ENCODE measurements at regions of chr12 and their contacts with region 1.

Region 1: GRCh38 chr12:121793838-121794533 is 498 bp upstream of the RHOF start:
- DNase-seq: peak; percentile 97
- ATAC-seq: peak; percentile 53
- H3K4me3 ChIP-seq: peak overlapping the region; percentile 30 to 97 (median 92)
- H3K4me3 Mint-ChIP-seq: peak overlapping the region; percentile 88
- H3K27ac ChIP-seq: peak overlapping the region; percentile 59 to 100
- H3K27ac Mint-ChIP-seq: peak overlapping the region; percentile 90
- H3K4me1 ChIP-seq: peaks cover 50 to 72% of the 10 kb centered on the region in 2 donors
- H3K4me1 Mint-ChIP-seq: peaks cover 65% of the 10 kb centered on the region
- H3K27me3 ChIP-seq: no peaks in the 10 kb centered on the region
- H3K27me3 Mint-ChIP-seq: no peaks in the 10 kb centered on the region
- CTCF ChIP-seq: peak; percentile 95

Region 2: GRCh38 chr12:121467115-121467793 is 326.7 kb before region 1 on chr12:
- CTCF ChIA-PET with region 1: no interaction called
- POLR2A ChIA-PET with region 1: no interaction called
- intact Hi-C with region 1: loop called (anchors 5 kb)
- DNase-seq: peak; percentile 94
- ATAC-seq: peak; percentile 85
- H3K4me3 ChIP-seq: peak overlapping the region in 4 of 5 experiments; percentile 56 to 82 (median 76)
- H3K4me3 Mint-ChIP-seq: peak overlapping the region; percentile 49
- H3K27ac ChIP-seq: peak overlapping the region; percentile 62 to 82
- H3K27ac Mint-ChIP-seq: peak overlapping the region; percentile 86
- H3K4me1 ChIP-seq: peaks cover 23 to 49% of the 10 kb centered on the region in 2 donors
- H3K4me1 Mint-ChIP-seq: peaks cover 59% of the 10 kb centered on the region
- H3K27me3 ChIP-seq: no peaks in the 10 kb centered on the region
- H3K27me3 Mint-ChIP-seq: no peaks in the 10 kb centered on the region
- CTCF ChIP-seq: no peak

Region 3: GRCh38 chr12:121626087-121626852 is 167.7 kb before region 1 on chr12 and contains the start of gene ORAI1:
- CTCF ChIA-PET with region 1: interaction called, 8 read pairs
- POLR2A ChIA-PET with region 1: no interaction called
- intact Hi-C with region 1: loop called (anchors 5 kb)
- DNase-seq: peak; percentile 97
- ATAC-seq: peak; percentile 76
- H3K4me3 ChIP-seq: peak within 1 kb of the TSS; percentile 61 to 93 (median 82)
- H3K4me3 Mint-ChIP-seq: peak within 1 kb of the TSS; percentile 96
- H3K27ac ChIP-seq: peak within 1 kb of the TSS; percentile 87 to 91
- H3K27ac Mint-ChIP-seq: peak within 1 kb of the TSS; percentile 96
- H3K4me1 ChIP-seq: peaks cover 40 to 50% of the 10 kb centered on the region in 2 donors
- H3K4me1 Mint-ChIP-seq: peaks cover 48% of the 10 kb centered on the region
- H3K27me3 ChIP-seq: no peaks in the 10 kb centered on the region
- H3K27me3 Mint-ChIP-seq: no peaks in the 10 kb centered on the region
- CTCF ChIP-seq: no peak
- total RNA-seq, gene ORAI1: 43.2 and 44.2 TPM in 2 replicates

Region 4: DNA sequence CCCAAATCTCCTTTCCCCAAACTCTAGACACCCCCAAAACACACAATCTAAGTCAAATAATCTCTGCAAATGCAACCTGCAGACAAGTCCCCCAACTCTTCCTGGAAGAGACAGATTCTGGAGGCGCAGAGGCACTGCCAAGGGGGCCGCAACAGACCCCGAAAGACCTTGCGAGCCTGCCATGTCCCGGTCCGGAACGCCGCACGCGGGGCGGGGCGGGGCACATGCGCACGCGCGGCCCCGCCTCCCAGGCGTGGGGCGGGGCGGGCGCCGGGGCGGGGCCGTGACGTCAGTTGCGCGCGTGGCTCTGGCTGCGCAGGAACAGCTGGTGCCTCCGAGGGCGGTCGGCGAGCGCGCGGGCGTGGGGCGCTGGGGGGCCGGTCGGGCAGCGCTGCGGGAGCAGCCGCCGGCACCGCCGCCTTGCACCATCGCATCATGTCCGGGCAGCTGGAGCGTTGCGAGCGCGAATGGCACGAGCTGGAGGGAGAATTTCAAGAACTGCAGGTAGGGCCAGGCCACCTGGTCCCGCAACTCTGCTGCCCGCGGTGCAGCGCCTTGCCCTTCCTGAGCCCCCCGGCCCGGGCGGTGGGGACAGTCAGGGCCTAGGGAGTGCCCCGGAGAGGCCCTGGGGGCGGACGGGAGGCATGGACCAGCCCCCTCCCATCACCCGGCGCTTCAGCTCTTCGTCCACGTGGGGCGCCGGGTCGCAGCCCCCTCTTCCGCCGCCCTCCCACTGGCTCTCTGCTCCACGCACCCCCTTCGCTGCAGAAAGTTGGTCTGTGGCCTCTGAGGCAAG is 81.3 kb before region 1 on chr12 and contains the start of gene TMEM120B:
- CTCF ChIA-PET with region 1: interaction called, 60 read pairs
- POLR2A ChIA-PET with region 1: interaction called, 3 read pairs
- intact Hi-C with region 1: loop called (anchors 1 kb)
- DNase-seq: peak; percentile 93
- ATAC-seq: peak; percentile 92
- H3K4me3 ChIP-seq: peak within 1 kb of the TSS; percentile 84 to 97 (median 89)
- H3K4me3 Mint-ChIP-seq: peak within 1 kb of the TSS; percentile 92
- H3K27ac ChIP-seq: peak within 1 kb of the TSS; percentile 48 to 63
- H3K27ac Mint-ChIP-seq: peak within 1 kb of the TSS; percentile 89
- H3K4me1 ChIP-seq: peaks cover 22 to 28% of the 10 kb centered on the region in 2 donors
- H3K4me1 Mint-ChIP-seq: peaks cover 25% of the 10 kb centered on the region
- H3K27me3 ChIP-seq: no peaks in the 10 kb centered on the region
- H3K27me3 Mint-ChIP-seq: no peaks in the 10 kb centered on the region
- CTCF ChIP-seq: no peak
- total RNA-seq, gene TMEM120B: 9.2 and 11.5 TPM in 2 replicates

Region 5: DNA sequence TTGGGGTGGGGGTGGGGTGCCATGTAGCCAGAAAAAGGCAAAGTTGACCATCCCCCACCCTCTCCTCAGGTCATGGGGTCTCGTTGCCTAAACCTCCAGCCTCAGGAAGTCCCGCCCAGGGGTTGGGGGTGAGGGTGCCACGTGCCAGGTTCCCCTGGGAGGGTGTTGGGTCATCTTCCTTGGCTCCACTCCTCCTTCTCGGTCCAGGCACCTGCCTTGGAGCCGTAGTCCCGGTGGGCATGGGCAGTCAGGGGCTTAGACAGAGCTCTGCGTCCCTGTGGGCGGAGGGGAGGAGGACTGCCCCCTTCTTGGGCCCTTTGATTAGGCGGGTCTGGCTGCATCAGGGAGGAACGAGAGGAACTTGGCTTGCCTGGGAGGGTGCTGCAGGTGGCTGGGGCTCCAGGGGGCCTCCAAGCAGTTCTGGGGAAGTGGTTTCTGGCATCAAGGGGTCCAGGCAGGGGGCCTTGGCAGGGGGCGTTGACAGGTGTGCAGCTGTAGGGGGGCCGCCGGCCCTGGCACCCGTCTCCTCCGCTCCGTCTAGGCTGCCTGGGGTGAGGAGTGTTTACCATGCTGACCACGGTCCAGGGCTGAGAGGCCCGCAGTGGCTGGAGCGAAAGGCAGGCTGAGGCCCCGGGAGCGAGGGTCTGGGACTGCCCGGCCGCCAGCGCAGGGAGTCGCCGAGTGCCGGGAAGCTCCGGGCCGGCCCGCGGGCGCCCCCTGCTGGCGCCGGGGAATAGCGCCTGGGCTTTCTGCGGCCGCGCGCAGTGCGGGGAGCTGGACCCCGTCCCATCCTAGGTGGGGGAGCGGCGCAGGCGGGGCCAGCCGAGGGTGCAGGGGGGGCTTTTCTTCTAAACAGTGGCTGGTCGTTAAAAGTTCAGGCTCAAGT is 17.7 kb after region 1 on chr12:
- CTCF ChIA-PET with region 1: interaction called, 1,947 read pairs
- POLR2A ChIA-PET with region 1: interaction called, 267 read pairs
- intact Hi-C with region 1: loop called (anchors 1 kb)
- DNase-seq: peak; percentile 81
- ATAC-seq: peak; percentile 78
- H3K4me3 ChIP-seq: peak overlapping the region; percentile 11 to 53 (median 47)
- H3K4me3 Mint-ChIP-seq: peak overlapping the region; percentile 84
- H3K27ac ChIP-seq: peak overlapping the region; percentile 11 to 61
- H3K27ac Mint-ChIP-seq: peak overlapping the region; percentile 87
- H3K4me1 ChIP-seq: peaks cover 42 to 51% of the 10 kb centered on the region in 2 donors
- H3K4me1 Mint-ChIP-seq: peaks cover 48% of the 10 kb centered on the region
- H3K27me3 ChIP-seq: no peaks in the 10 kb centered on the region
- H3K27me3 Mint-ChIP-seq: no peaks in the 10 kb centered on the region
- CTCF ChIP-seq: peak; percentile 100

Region 6: GRCh38 chr12:121839106-121839992 is 45.4 kb after region 1 on chr12:
- CTCF ChIA-PET with region 1: interaction called, 38 read pairs
- POLR2A ChIA-PET with region 1: interaction called, 4 read pairs
- intact Hi-C with region 1: loop called (anchors 1 kb)
- DNase-seq: peak; percentile 99
- ATAC-seq: peak; percentile 99
- H3K4me3 ChIP-seq: peak overlapping the region; percentile 65 to 90 (median 78)
- H3K4me3 Mint-ChIP-seq: peak overlapping the region; percentile 99
- H3K27ac ChIP-seq: peak overlapping the region in 1 of 2 donors; percentile 56
- H3K27ac Mint-ChIP-seq: peak overlapping the region; percentile 91
- H3K4me1 ChIP-seq: peaks cover 7 to 16% of the 10 kb centered on the region in 2 donors
- H3K4me1 Mint-ChIP-seq: peaks cover 18% of the 10 kb centered on the region
- H3K27me3 ChIP-seq: no peaks in the 10 kb centered on the region
- H3K27me3 Mint-ChIP-seq: no peaks in the 10 kb centered on the region
- CTCF ChIP-seq: peak; percentile 13

Region 7: DNA sequence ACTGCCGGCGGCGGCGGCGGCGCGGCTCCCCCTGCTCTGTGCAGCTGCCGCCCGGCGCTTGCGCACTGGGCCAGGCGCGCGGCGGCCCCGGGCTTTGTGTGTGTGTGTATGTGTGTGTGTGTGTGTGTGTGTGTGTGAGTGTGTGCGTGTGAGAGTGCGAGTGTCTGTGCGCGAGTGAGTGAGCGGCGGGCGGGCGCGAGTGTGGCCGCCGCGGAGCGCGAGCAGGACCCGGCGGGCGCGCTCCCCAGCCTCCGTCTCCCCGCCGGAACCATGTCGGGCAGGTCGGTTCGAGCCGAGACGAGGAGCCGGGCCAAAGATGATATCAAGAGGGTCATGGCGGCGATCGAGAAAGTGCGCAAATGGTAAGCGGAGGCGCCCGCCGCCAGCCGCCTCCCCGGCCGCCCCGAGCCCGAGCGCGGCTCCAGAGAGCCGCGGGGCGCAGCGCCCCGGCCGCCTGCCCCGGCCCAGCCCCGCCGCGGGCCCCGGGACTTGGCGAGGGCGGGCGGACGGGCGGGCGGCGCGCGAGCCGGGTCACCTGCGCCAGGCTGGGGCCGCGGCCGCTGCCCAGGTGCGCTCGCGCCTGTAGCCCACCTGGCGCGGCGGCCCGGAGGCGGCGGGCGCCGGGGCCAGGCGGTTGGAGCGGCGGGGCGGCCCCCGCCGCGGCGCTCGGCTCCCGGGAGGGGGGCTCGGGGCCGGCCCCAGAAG is 228.0 kb after region 1 on chr12 and contains the start of gene BCL7A:
- CTCF ChIA-PET with region 1: interaction called, 5 read pairs
- POLR2A ChIA-PET with region 1: no interaction called
- intact Hi-C with region 1: loop called (anchors 10 kb)
- DNase-seq: peak; percentile 90
- ATAC-seq: peak; percentile 73
- H3K4me3 ChIP-seq: peak within 1 kb of the TSS; percentile 26 to 86 (median 78)
- H3K4me3 Mint-ChIP-seq: peak within 1 kb of the TSS; percentile 94
- H3K27ac ChIP-seq: peak within 1 kb of the TSS; percentile 67 to 80
- H3K27ac Mint-ChIP-seq: peak within 1 kb of the TSS; percentile 98
- H3K4me1 ChIP-seq: peaks cover 32 to 51% of the 10 kb centered on the region in 2 donors
- H3K4me1 Mint-ChIP-seq: peaks cover 38% of the 10 kb centered on the region
- H3K27me3 ChIP-seq: no peaks in the 10 kb centered on the region
- H3K27me3 Mint-ChIP-seq: no peaks in the 10 kb centered on the region
- CTCF ChIP-seq: no peak
- total RNA-seq, gene BCL7A: 75.6 and 75.9 TPM in 2 replicates

Measured in B cell (primary cell).